HepG2 (cell line): ENCODE measurements at regions of chr11 and their contacts with region 1.

Region 1: GRCh38 chr11:132028380-132029240 is 658.2 kb downstream of the NTM start:
- DNase-seq: peak; percentile 16
- ATAC-seq: peak; percentile 82
- H3K4me3 ChIP-seq: no peak overlapping the region
- H3K27ac ChIP-seq: no peak overlapping the region
- H3K4me1 ChIP-seq: no peaks in the 10 kb centered on the region
- H3K27me3 ChIP-seq: no peaks in the 10 kb centered on the region
- CTCF ChIP-seq: peak; percentile 64
- EP300 ChIP-seq: no peak
- POLR2A ChIP-seq: no peak
- RAD21 ChIP-seq: no peak

Region 2: DNA sequence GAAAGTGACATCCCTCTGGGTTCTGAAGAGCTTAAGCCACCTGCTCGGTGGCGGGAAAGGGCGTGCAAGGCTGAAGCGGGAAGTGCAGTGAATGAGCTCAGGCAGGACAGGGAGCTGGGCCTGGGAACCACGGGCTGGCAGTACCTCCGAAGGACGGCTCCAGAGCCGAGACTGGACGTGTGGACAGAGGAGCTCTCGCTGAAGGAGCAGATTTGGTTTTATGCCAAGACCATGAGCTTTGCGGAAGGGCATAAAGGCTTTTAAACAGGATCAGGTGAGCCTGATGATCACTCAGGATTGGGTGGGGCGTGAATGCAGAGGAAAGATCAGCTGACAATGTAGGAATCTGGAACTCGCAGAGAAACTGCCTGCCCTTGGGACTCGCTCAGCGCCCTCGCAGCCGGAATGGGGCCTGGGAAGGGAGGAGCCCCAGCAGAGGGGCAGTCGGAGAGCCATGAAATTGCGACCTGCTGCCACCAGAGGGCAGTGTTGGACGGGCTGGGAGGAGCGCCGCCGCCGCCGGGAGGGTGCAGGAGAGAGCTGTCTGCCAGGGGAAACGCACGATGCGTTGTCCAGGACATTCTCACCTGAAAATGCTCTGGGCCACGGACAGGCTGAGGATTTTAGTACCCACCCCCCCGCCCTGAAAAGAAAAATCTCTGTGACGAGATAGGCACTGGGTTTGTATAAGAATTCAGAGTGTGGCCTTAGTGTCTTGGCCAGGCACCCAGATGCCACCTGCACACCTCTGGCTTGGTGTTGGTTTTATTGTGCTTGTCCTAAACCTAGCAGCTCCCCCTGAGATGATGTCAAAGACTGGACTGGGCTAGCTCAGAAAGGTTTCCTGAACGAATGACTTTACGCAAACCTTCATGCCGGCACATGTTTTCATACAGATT is 333.8 kb before region 1 on chr11:
- CTCF ChIA-PET with region 1: interaction called, 6 read pairs
- POLR2A ChIA-PET with region 1: no interaction called
- in situ Hi-C with region 1: no loop called
- intact Hi-C with region 1: loop called (anchors 5 kb)
- DNase-seq: peak; percentile 52
- ATAC-seq: peak; percentile 94
- H3K4me3 ChIP-seq: no peak overlapping the region
- H3K27ac ChIP-seq: no peak overlapping the region
- H3K4me1 ChIP-seq: no peaks in the 10 kb centered on the region
- H3K27me3 ChIP-seq: peaks cover 0 to 25% of the 10 kb centered on the region in 2 experiments; a peak in 1 of 5 replicates
- CTCF ChIP-seq: peak; percentile 89
- EP300 ChIP-seq: no peak
- POLR2A ChIP-seq: no peak
- RAD21 ChIP-seq: peak; percentile 48

Region 3: GRCh38 chr11:131748151-131749050 is 280.2 kb before region 1 on chr11:
- CTCF ChIA-PET with region 1: interaction called, 3 read pairs
- POLR2A ChIA-PET with region 1: no interaction called
- in situ Hi-C with region 1: loop called (anchors 25 kb)
- intact Hi-C with region 1: loop called (anchors 1 kb)
- DNase-seq: peak; percentile 26
- ATAC-seq: peak; percentile 89
- H3K4me3 ChIP-seq: no peak overlapping the region
- H3K27ac ChIP-seq: no peak overlapping the region
- H3K4me1 ChIP-seq: no peaks in the 10 kb centered on the region
- H3K27me3 ChIP-seq: no peaks in the 10 kb centered on the region; a peak in 1 of 5 replicates
- CTCF ChIP-seq: peak; percentile 77
- EP300 ChIP-seq: no peak
- POLR2A ChIP-seq: no peak
- RAD21 ChIP-seq: no peak

Region 4: DNA sequence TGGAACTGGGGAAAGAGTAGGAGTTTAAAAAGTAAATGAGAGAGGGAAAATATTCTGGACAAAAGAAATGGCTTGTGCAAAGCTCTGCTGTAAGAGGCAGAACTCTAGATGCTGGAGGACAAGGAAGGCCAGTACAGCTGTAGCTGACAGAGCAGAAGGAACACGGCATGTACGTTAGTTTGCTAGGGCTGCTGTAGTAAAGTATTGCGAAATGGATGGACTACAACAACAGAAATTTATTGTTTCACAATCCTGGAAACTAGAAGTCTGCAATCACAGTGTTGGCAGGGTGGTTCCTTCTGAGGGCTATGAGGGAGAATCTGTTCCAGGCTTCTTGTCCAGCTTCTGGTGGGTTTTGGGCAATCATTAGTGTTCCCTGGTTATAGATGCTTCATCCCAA is 203.8 kb before region 1 on chr11:
- CTCF ChIA-PET with region 1: no interaction called
- POLR2A ChIA-PET with region 1: no interaction called
- in situ Hi-C with region 1: no loop called
- intact Hi-C with region 1: no loop called
- DNase-seq: no peak
- ATAC-seq: no peak
- H3K4me3 ChIP-seq: no peak overlapping the region
- H3K27ac ChIP-seq: no peak overlapping the region
- H3K4me1 ChIP-seq: peaks cover 8% of the 10 kb centered on the region; the same call in 1 of the 2 replicates
- H3K27me3 ChIP-seq: no peaks in the 10 kb centered on the region
- CTCF ChIP-seq: no peak
- EP300 ChIP-seq: no peak
- POLR2A ChIP-seq: no peak
- RAD21 ChIP-seq: no peak

Region 5: GRCh38 chr11:132058211-132058772 is 29.7 kb after region 1 on chr11:
- CTCF ChIA-PET with region 1: no interaction called
- POLR2A ChIA-PET with region 1: no interaction called
- in situ Hi-C with region 1: no loop called
- intact Hi-C with region 1: no loop called
- DNase-seq: no peak
- ATAC-seq: no peak
- H3K4me3 ChIP-seq: no peak overlapping the region
- H3K27ac ChIP-seq: no peak overlapping the region
- H3K4me1 ChIP-seq: no peaks in the 10 kb centered on the region
- H3K27me3 ChIP-seq: no peaks in the 10 kb centered on the region
- CTCF ChIP-seq: no peak
- EP300 ChIP-seq: no peak
- POLR2A ChIP-seq: no peak
- RAD21 ChIP-seq: no peak